ENCODE measurements at regions of chr4 and their contacts with region 1.

Region 1: GRCh38 chr4:170040031-170040680 is 14.0 kb upstream of the MFAP3L start:
- DNase-seq: no peak
- H3K4me3 ChIP-seq: no peak overlapping the region
- H3K27ac ChIP-seq: no peak overlapping the region
- H3K4me1 ChIP-seq: no peaks in the 10 kb centered on the region
- H3K27me3 ChIP-seq: 0 out of 2 replicates have a peak, but pooled peaks cover 9% of the 10 kb centered on the region

Region 2: GRCh38 chr4:169716677-169717076 is 323.5 kb before region 1 on chr4:
- in situ Hi-C with region 1: no loop called
- DNase-seq: peak; percentile 32
- H3K4me3 ChIP-seq: no peak overlapping the region
- H3K27ac ChIP-seq: no peak overlapping the region
- H3K4me1 ChIP-seq: peaks cover 10% of the 10 kb centered on the region
- H3K27me3 ChIP-seq: no peaks in the 10 kb centered on the region

Region 3: GRCh38 chr4:169791527-169792156 is 248.5 kb before region 1 on chr4:
- in situ Hi-C with region 1: no loop called
- DNase-seq: peak; percentile 86
- H3K4me3 ChIP-seq: peak overlapping the region; percentile 70
- H3K27ac ChIP-seq: no peak overlapping the region
- H3K4me1 ChIP-seq: peaks cover 6% of the 10 kb centered on the region
- H3K27me3 ChIP-seq: 0 out of 2 replicates have a peak, but pooled peaks cover 6% of the 10 kb centered on the region

Region 4: DNA sequence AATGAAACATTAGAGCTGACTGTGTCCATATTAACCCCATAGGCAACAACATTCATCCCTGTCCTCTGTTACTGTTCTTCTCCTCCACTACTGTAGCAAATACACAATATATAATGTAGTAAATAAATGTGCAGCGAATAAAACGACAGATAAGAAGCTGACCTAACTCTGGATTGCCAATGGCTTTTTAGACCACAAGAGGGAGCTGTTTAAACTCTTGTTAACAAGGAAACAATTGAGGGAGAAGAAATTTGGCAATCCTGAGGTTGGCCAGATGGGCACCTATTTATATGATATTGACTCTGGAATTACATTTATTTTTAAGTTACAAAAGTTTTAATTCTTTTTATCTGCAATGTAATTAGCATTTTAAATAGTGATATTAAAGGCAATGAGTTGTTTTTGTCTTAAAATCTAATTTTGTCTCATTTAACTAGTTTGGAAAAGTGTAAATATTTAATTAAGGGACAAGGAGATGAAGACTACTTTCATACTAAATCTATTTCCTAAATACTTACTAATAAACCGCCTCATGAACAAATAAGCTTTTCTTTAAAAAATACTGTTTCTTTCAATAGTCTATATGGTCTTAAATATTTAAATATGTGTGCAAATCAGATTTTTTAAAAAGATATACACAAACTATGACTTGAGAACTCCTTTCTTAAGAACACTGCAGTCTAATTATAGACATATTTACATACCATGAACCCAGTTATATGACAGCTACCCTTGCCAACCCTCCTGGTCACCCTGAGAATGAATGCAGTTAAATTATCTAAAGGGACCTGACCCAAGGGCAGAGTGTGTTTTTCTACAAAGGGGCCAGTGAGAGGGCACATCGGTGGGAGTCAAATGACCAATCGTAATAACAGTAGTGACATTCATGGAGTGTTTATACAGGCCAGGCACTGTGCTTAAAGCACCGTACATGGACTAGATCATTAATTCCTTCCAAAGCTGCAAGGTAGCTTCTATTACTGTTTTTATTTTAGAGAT is 229.5 kb before region 1 on chr4:
- in situ Hi-C with region 1: loop called (anchors 5 kb)
- DNase-seq: peak; percentile 82
- H3K4me3 ChIP-seq: no peak overlapping the region
- H3K27ac ChIP-seq: no peak overlapping the region
- H3K4me1 ChIP-seq: no peaks in the 10 kb centered on the region
- H3K27me3 ChIP-seq: peaks cover 9% of the 10 kb centered on the region

Region 5: GRCh38 chr4:169968999-169969398 is 71.2 kb before region 1 on chr4:
- in situ Hi-C with region 1: no loop called
- DNase-seq: peak; percentile 95
- H3K4me3 ChIP-seq: no peak overlapping the region
- H3K27ac ChIP-seq: peak overlapping the region; percentile 83
- H3K4me1 ChIP-seq: peaks cover 31% of the 10 kb centered on the region
- H3K27me3 ChIP-seq: no peaks in the 10 kb centered on the region